ENCODE measurements at regions of chr2 and their contacts with region 1.

Region 1: DNA sequence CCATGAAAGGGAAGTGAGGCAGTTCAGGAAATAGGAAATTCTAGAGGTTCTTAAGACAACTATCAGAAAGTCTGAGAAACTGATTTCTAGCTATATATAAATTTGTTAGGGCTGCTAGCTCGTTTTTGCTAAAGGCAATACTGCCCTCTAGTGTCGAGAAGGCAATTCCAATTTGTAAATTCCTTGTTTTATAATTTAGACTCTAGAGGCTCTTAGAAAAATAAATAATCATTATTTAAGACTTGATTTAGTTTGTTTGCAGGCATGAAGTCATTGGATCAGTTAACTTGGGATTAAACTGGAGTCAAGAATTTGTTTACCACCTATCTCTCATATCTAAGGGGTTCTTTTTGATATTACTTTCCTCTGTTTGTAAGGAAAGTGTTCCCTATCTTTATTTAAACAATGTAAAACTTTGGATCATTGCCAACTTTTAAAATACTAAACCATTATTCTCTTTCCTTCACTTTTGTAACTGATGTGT is 66.2 kb downstream of the ACVR2A start:
- DNase-seq: peak; percentile 48 to 65 (median 57)
- H3K4me3 ChIP-seq: no peak overlapping the region
- H3K4me3 Mint-ChIP-seq: no peak overlapping the region
- H3K27ac ChIP-seq: no peak overlapping the region
- H3K27ac Mint-ChIP-seq: peak overlapping the region in 4 of 7 donors; percentile 17 to 52 (median 36)
- H3K4me1 ChIP-seq: peaks cover 12% of the 10 kb centered on the region
- H3K4me1 Mint-ChIP-seq: peaks cover 11 to 18% (median 14%) of the 10 kb centered on the region in 4 donors
- H3K27me3 ChIP-seq: no peaks in the 10 kb centered on the region
- H3K27me3 Mint-ChIP-seq: no peaks in the 10 kb centered on the region

Region 2: GRCh38 chr2:147045113-147045512 is 865.9 kb before region 1 on chr2:
- CTCF ChIA-PET with region 1: interaction called, 69 read pairs
- POLR2A ChIA-PET with region 1: no interaction called
- intact Hi-C with region 1: loop called (anchors 1 kb)
- DNase-seq: peak; percentile 8 to 37 (median 33)
- H3K4me3 ChIP-seq: no peak overlapping the region
- H3K4me3 Mint-ChIP-seq: no peak overlapping the region
- H3K27ac ChIP-seq: no peak overlapping the region
- H3K27ac Mint-ChIP-seq: peak overlapping the region in 3 of 7 donors; percentile 4 to 85 (median 74)
- H3K4me1 ChIP-seq: no peaks in the 10 kb centered on the region
- H3K4me1 Mint-ChIP-seq: peaks cover 0 to 5% (median under 1%) of the 10 kb centered on the region in 4 donors
- H3K27me3 ChIP-seq: no peaks in the 10 kb centered on the region
- H3K27me3 Mint-ChIP-seq: no peaks in the 10 kb centered on the region

Region 3: GRCh38 chr2:147980940-147981528 is 70.0 kb after region 1 on chr2:
- CTCF ChIA-PET with region 1: no interaction called
- POLR2A ChIA-PET with region 1: no interaction called
- intact Hi-C with region 1: no loop called
- DNase-seq: no peak
- H3K4me3 ChIP-seq: no peak overlapping the region
- H3K4me3 Mint-ChIP-seq: no peak overlapping the region
- H3K27ac ChIP-seq: no peak overlapping the region
- H3K27ac Mint-ChIP-seq: peak overlapping the region in 2 of 7 donors; percentile 17 to 19
- H3K4me1 ChIP-seq: peaks cover 18% of the 10 kb centered on the region
- H3K4me1 Mint-ChIP-seq: peaks cover 31 to 55% (median 44%) of the 10 kb centered on the region in 4 donors
- H3K27me3 ChIP-seq: no peaks in the 10 kb centered on the region
- H3K27me3 Mint-ChIP-seq: no peaks in the 10 kb centered on the region